Thyroid gland (tissue), 4 donors: ENCODE measurements at regions of chr4 and their contacts with region 1.

Region 1: GRCh38 chr4:159102622-159103383 is at the start of gene RAPGEF2:
- DNase-seq: peak; percentile 94 to 95
- H3K4me3 ChIP-seq: peak within 1 kb of the TSS; percentile 79 to 88 (median 87)
- H3K27ac ChIP-seq: peak within 1 kb of the TSS; percentile 64 to 97 (median 96)
- H3K4me1 ChIP-seq: peaks cover 24 to 32% of the 10 kb centered on the region in 2 donors
- H3K27me3 ChIP-seq: no peaks in the 10 kb centered on the region
- CTCF ChIP-seq: peak in 1 of 6 experiments; percentile 6
- POLR2A ChIP-seq: peak in 1 of 2 donors; percentile 99
- total RNA-seq, gene RAPGEF2: 60.2 to 109 (median 79.7) TPM

Region 2: DNA sequence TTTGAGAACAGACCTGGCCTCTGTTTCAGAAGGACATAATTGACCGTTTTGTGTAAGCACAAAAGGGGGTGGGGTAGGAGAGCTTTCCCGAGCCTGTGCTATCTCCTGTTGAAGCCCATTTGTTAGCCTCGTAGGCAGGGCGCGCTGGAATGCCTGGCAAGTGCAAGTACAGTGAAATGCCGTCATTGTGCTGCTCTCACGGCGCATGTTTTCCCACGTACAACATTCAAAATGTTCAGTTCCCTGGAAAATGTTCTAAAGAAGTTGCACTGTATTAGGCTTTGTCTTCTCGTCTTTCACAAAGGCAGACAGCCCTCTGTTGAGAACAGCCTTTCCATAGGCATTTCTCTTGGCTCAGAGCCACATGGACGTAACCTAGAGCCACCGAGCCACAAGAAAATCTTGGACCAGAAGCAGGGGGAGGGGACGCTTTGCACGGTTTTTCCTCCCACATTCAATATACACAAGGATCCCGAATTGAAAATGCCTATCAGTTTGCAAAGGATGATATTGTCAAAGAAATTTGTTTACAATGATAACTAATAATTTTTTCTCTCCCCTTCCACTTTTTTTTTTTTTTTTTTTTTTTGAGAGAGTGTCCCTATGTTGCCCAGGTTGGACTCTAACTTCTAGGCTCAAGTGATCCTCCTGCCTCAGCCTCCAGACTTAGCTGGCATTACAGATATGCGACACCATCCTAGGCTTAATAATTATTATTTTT is 54.5 kb before region 1 on chr4:
- intact Hi-C with region 1: loop called (anchors 10 kb)
- DNase-seq: peak; percentile 79 to 84
- H3K4me3 ChIP-seq: no peak overlapping the region
- H3K27ac ChIP-seq: peak overlapping the region; percentile 33 to 64 (median 44)
- H3K4me1 ChIP-seq: peaks cover 6 to 8% of the 10 kb centered on the region in 2 donors
- H3K27me3 ChIP-seq: no peaks in the 10 kb centered on the region
- CTCF ChIP-seq: no peak
- POLR2A ChIP-seq: no peak